Dorsolateral prefrontal cortex (tissue), 120 donors: ENCODE measurements at regions of chr18 and their contacts with region 1.

Region 1: GRCh38 chr18:31722369-31722957 is 38.1 kb upstream of the B4GALT6 start:
- DNase-seq: peak; percentile 58 to 92 (median 79)
- H3K4me3 ChIP-seq: no peak overlapping the region
- H3K27ac ChIP-seq: no peak overlapping the region
- H3K27me3 ChIP-seq: peaks cover 0 to 8% (median 0%) of the 10 kb centered on the region in 45 donors
- CTCF ChIP-seq: peak; percentile 53 to 93 (median 86)

Region 2: GRCh38 chr18:31555971-31556747 is 166.3 kb before region 1 on chr18:
- intact Hi-C with region 1: loop called (anchors 2 to 5 kb)
- DNase-seq: peak in 2 of 10 donors; percentile 37 to 45
- H3K4me3 ChIP-seq: no peak overlapping the region
- H3K27ac ChIP-seq: no peak overlapping the region
- H3K27me3 ChIP-seq: peaks cover 0 to 5% (median 0%) of the 10 kb centered on the region in 45 donors
- CTCF ChIP-seq: peak; percentile 73 to 98 (median 88)

Region 3: GRCh38 chr18:31563778-31564177 is 158.7 kb before region 1 on chr18:
- intact Hi-C with region 1: loop called in 1 of 2 experiments (anchors 5 kb)
- DNase-seq: no peak
- H3K4me3 ChIP-seq: no peak overlapping the region
- H3K27ac ChIP-seq: no peak overlapping the region
- H3K27me3 ChIP-seq: peaks cover 0 to 17% (median 0%) of the 10 kb centered on the region in 45 donors
- CTCF ChIP-seq: peak in 41 of 56 donors; percentile 7 to 51 (median 22)